ENCODE measurements at regions of chr7 and their contacts with region 1.

Region 1: DNA sequence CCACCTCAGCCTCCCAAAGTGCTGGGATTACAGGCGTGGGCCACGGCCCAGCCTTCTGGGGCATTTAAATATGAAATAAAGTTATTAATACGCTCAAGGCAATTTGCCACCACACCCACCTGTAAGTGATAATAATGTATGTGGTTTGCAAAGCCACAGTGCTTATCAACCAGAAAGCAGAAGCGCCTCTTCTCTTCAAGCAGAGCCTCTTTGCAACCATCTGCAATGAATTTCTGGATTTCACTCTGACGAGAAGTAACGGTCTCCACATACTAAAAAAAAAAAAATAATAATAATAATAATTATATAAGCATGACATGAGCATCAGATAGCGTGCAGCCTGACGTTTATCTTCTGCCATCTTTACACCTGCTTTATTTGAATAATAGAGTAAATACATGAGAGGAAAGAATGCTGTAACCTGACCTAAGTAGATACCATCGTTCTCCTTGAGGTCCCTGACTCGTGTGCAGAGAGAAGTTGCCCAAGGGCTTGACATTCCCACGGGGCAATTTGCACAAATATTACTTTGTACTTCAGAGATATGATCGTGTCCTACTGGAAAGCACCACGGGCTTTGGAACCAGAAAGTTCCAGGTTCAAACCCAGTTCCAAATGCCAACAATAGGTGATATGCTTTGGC is 34.0 kb downstream of the BRI3 start:
- ATAC-seq: no peak
- H3K4me3 ChIP-seq: no peak overlapping the region
- H3K27ac ChIP-seq: no peak overlapping the region
- H3K4me1 ChIP-seq: no peaks in the 10 kb centered on the region

Region 2: DNA sequence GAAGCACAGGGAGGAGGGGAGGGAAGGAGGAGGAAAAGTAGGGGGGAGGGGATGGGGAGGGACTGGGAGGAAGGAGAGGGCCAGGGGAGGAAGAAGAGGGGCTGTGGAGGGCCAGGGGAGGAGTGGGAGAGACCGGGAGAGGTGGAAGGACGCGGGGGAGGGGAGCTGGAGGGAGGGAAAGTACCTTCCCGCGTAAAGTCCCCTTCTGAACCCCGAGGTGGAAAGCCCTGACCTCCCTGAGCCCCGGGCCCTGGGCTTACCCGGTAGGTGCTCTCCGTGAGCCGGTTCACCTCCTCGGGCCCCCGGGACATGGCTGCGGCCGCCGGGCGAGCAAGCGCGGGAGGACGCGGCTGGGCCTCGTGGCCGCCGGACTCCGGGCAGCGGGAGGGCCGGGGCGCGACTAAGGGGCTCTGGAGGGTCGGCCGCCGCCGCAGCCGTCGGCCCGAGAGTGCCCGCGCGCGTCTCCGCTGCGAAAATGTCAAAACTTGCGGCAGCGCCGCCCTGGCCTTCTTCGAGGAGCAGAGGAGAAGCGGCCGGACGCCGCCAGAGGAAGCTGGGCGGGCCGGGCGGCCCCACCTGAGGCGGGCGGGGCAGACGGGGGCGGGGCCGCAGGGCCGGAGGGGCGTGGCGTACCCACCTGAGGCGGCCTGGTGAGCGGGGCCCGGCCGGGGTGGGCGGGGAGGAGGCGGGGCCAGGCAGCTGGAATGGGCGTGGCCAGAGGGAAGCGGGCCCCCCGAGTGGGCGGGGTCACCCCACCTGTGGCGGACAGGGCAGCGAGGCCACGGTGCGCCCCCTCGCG is 85.3 kb after region 1 on chr7 and contains the start of gene BAIAP2L1:
- in situ Hi-C with region 1: loop called in 1 of 9 experiments (anchors 25 kb)
- ATAC-seq: peak; percentile 71 to 92 (median 89)
- H3K4me3 ChIP-seq: peak within 1 kb of the TSS; percentile 37 to 53 (median 44)
- H3K27ac ChIP-seq: no peak within 1 kb of the TSS
- H3K4me1 ChIP-seq: no peaks in the 10 kb centered on the region
- total RNA-seq, gene BAIAP2L1: 0.66 to 2.5 (median 1.4) TPM